ENCODE measurements at regions of chr14 and their contacts with region 1.

Region 1: DNA sequence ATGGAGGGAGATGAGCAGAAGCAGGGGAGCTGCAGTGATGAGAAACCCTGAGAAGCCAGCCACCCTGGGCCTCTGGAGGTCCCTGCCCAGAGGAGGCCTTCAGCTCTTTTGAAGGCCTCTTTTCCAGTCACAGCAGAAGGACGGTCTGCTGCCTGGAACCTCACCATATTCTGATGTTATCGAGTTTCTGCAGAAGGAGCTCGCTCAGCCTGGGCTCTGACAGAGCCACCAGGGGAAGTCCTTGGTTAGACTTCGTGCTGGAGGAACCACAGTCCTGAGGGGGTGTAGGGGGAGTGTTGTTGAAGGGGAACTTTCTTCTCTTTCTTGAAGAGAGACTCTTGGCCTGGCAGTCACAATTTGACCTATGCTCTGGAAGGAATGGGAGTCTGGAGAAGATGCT is 25.1 kb upstream of the BATF start:
- DNase-seq: peak; percentile 45
- ATAC-seq: peak; percentile 82
- H3K4me3 ChIP-seq: no peak overlapping the region
- H3K4me3 Mint-ChIP-seq: peak overlapping the region; percentile 23
- H3K27ac ChIP-seq: no peak overlapping the region
- H3K27ac Mint-ChIP-seq: no peak overlapping the region
- H3K4me1 ChIP-seq: peaks cover 10 to 23% of the 10 kb centered on the region in 2 donors
- H3K4me1 Mint-ChIP-seq: peaks cover 33% of the 10 kb centered on the region
- H3K27me3 ChIP-seq: no peaks in the 10 kb centered on the region
- H3K27me3 Mint-ChIP-seq: no peaks in the 10 kb centered on the region
- CTCF ChIP-seq: no peak

Region 2: DNA sequence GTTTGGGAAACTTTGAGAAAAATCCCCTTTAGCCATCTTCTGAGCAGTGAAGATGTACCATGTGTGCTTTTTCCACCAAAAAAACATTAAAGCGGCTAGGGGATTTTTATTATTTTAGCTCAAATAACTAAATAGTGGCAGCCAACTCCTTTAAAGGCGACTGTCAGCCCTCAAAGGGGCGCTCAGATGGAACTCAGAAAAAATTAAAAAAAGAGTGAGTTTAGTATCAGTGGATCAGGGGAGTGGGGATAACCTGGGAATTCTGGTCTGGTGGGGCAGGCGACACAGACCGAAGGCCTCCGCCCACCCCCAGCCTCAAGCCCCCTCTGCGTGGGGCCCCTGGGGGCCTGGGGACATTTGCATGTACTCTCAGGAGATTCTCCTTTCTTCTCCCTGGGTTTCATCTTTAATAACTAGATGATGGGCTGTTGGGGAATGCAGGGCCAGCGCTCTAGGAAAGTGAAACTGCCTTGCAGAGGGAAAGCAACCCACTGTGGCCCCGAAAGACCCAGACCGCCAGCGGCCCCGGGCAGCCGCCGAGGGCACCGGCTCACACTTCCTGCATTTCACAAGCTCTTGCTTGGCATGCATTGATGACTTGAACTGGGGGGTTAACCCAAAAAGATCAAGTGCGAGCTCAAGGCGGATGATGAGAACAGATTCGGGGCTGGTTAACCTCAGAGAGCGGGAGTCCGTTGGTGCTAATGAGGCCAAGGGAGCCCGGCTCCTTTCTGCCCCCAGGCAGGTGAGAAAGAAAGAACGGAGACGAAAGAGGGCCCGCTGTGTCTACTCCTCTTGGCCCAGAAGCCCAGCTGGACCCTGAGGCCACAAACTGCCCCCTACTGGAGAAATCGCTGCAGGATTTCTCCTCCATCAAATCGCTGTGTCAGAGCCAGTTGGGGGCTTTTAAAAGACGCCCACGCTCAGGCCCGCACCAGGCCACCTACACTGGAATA is 17.8 kb after region 1 on chr14:
- CTCF ChIA-PET with region 1: interaction called, 43 read pairs
- POLR2A ChIA-PET with region 1: interaction called, 5 read pairs
- intact Hi-C with region 1: loop called (anchors 2 kb)
- DNase-seq: peak; percentile 78
- ATAC-seq: peak; percentile 54
- H3K4me3 ChIP-seq: peak overlapping the region; percentile 29 to 62 (median 45)
- H3K4me3 Mint-ChIP-seq: peak overlapping the region; percentile 91
- H3K27ac ChIP-seq: peak overlapping the region; percentile 15 to 55
- H3K27ac Mint-ChIP-seq: peak overlapping the region; percentile 95
- H3K4me1 ChIP-seq: peaks cover 29 to 36% of the 10 kb centered on the region in 2 donors
- H3K4me1 Mint-ChIP-seq: peaks cover 47% of the 10 kb centered on the region
- H3K27me3 ChIP-seq: no peaks in the 10 kb centered on the region
- H3K27me3 Mint-ChIP-seq: no peaks in the 10 kb centered on the region
- CTCF ChIP-seq: peak; percentile 74

Region 3: DNA sequence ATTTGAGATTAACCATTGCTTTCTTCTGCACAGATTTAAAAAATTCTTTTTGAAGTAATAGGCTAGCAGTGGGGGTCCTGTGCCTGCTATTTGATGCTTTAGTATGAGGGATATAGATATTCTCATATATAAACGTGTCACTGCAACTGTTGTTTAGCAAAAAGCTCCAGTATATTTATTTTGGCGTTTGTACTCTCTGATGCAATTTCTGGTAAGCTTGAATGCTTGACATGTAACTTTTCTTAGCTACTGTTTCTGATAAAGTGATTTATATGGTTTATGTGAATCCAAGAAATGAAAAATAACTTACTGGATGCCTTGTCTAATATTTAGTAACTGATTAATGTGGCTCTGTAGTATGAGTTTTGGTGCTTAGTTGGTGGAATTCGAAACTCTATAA is 241.0 kb after region 1 on chr14:
- CTCF ChIA-PET with region 1: no interaction called
- POLR2A ChIA-PET with region 1: no interaction called
- intact Hi-C with region 1: no loop called
- DNase-seq: no peak
- ATAC-seq: no peak
- H3K4me3 ChIP-seq: no peak overlapping the region
- H3K4me3 Mint-ChIP-seq: no peak overlapping the region
- H3K27ac ChIP-seq: no peak overlapping the region
- H3K27ac Mint-ChIP-seq: no peak overlapping the region
- H3K4me1 ChIP-seq: no peaks in the 10 kb centered on the region
- H3K4me1 Mint-ChIP-seq: no peaks in the 10 kb centered on the region
- H3K27me3 ChIP-seq: no peaks in the 10 kb centered on the region
- H3K27me3 Mint-ChIP-seq: no peaks in the 10 kb centered on the region
- CTCF ChIP-seq: no peak